CD4-positive, alpha-beta T cell (primary cell): ENCODE measurements at regions of chr7 and their contacts with region 1.

Region 1: GRCh38 chr7:105876091-105876963 is at the start of gene ATXN7L1:
- DNase-seq: peak; percentile 83 to 96 (median 92)
- ATAC-seq: peak; percentile 90
- H3K4me3 ChIP-seq: peak within 1 kb of the TSS; percentile 96
- H3K4me3 Mint-ChIP-seq: peak within 1 kb of the TSS; percentile 99
- H3K27ac ChIP-seq: peak within 1 kb of the TSS; percentile 55 to 77
- H3K27ac Mint-ChIP-seq: peak within 1 kb of the TSS; percentile 98
- H3K4me1 ChIP-seq: peaks cover 47% of the 10 kb centered on the region
- H3K4me1 Mint-ChIP-seq: peaks cover 81% of the 10 kb centered on the region
- H3K27me3 ChIP-seq: no peaks in the 10 kb centered on the region
- H3K27me3 Mint-ChIP-seq: no peaks in the 10 kb centered on the region
- CTCF ChIP-seq: peak; percentile 12
- total RNA-seq, gene ATXN7L1: 27.3 to 29.2 TPM

Region 2: DNA sequence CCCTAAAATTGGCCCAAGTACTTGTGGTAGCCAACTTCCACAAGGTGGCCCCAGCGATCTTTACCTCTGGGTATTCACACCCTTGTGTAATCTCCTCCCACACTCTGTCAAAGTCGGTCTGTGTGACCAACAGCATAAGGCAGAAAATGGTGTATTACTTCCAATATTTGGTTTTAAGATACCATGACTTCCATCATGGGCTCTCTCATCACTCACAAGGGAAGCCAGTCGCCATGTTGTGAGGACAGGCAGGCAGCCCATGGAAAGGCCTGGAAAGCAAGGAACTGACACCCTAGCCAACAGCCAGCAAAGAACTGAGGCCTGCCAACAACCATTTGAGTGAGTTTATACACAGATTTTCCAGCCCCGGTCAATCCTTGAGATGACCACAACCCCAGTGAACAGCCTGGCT is 953.3 kb before region 1 on chr7:
- CTCF ChIA-PET with region 1: no interaction called
- POLR2A ChIA-PET with region 1: no interaction called
- intact Hi-C with region 1: no loop called
- DNase-seq: peak; percentile 47 to 89 (median 65)
- ATAC-seq: peak; percentile 95
- H3K4me3 ChIP-seq: no peak overlapping the region
- H3K4me3 Mint-ChIP-seq: no peak overlapping the region
- H3K27ac ChIP-seq: no peak overlapping the region
- H3K27ac Mint-ChIP-seq: no peak overlapping the region
- H3K4me1 ChIP-seq: peaks cover 6% of the 10 kb centered on the region
- H3K4me1 Mint-ChIP-seq: no peaks in the 10 kb centered on the region
- H3K27me3 ChIP-seq: no peaks in the 10 kb centered on the region
- H3K27me3 Mint-ChIP-seq: no peaks in the 10 kb centered on the region
- CTCF ChIP-seq: peak; percentile 76

Region 3: DNA sequence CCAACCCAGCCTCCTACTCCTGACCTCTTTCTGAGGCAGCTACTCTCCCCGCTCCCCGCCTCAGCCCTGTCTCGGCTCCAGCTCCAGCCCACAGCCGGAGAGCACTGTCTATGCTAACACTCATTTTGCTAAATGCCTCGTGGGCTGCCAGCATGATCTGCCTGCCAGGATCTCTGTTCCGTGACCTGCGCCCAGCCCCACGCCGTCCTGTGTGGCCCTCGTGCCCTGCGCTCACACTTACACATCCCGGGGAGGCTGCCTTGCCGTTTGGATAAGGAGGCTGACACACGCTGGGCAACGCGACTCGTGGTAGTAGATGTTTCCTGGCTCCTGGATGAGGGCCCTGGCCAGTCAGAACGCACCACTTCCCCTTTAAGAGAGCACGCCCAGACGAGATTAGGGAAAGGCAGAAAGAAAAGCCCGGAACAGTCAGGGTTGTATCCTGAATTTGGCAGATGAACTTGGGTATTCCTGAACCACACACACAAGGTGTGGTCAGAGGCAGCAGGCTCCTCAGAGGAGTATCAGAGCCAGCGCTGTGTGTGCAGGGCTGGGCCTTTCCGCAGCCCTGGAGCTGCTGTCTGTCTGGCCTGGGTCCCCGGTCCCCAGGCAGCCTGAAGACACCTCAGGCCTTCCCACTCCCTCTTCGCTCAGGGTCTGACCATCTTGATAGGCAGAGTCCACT is 197.4 kb before region 1 on chr7:
- CTCF ChIA-PET with region 1: no interaction called
- POLR2A ChIA-PET with region 1: no interaction called
- intact Hi-C with region 1: loop called in 1 of 2 experiments (anchors 5 kb)
- DNase-seq: peak in 6 of 14 experiments; percentile 12 to 60 (median 50)
- ATAC-seq: peak; percentile 2
- H3K4me3 ChIP-seq: peak overlapping the region; percentile 55
- H3K4me3 Mint-ChIP-seq: peak overlapping the region; percentile 88
- H3K27ac ChIP-seq: peak overlapping the region; percentile 39 to 88
- H3K27ac Mint-ChIP-seq: peak overlapping the region; percentile 98
- H3K4me1 ChIP-seq: peaks cover 66% of the 10 kb centered on the region
- H3K4me1 Mint-ChIP-seq: peaks cover 88% of the 10 kb centered on the region
- H3K27me3 ChIP-seq: no peaks in the 10 kb centered on the region
- H3K27me3 Mint-ChIP-seq: no peaks in the 10 kb centered on the region
- CTCF ChIP-seq: no peak

Region 4: DNA sequence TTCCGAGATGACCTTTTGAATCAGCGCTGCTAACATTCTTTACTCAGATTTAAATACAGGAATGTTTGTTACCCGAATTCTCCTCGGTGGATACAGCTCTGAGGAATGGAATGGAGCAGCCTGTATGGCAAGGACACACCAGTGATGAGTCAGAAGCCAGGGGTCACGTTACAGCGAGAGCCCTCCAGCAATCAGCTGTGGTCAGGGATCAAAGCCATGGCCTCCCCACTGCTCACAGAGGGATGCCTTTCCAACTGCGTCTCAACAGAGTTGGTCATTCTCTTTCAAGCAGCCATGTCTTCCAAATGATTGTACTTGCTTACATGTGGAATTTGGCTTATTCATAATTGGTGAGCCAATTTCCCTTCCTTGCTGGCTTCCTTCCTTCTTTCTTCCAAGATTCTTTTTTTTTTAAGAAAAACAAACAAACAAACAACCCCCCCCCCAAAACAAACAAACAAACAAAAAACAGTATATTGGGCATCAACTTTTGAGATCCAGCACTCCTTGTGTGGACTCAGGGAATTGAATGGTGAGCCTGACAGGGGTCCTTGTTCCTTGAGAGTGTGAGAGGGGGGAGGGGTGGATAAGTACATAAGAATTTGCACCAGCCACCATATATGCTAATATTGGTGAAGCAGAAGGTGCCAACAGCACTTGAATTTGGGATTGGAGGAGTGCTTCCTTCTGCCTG is 100.1 kb before region 1 on chr7:
- CTCF ChIA-PET with region 1: no interaction called
- POLR2A ChIA-PET with region 1: no interaction called
- intact Hi-C with region 1: no loop called
- DNase-seq: no peak
- ATAC-seq: no peak
- H3K4me3 ChIP-seq: no peak overlapping the region
- H3K4me3 Mint-ChIP-seq: no peak overlapping the region
- H3K27ac ChIP-seq: no peak overlapping the region
- H3K27ac Mint-ChIP-seq: no peak overlapping the region
- H3K4me1 ChIP-seq: no peaks in the 10 kb centered on the region
- H3K4me1 Mint-ChIP-seq: peaks cover 8% of the 10 kb centered on the region
- H3K27me3 ChIP-seq: no peaks in the 10 kb centered on the region
- H3K27me3 Mint-ChIP-seq: no peaks in the 10 kb centered on the region
- CTCF ChIP-seq: no peak

Region 5: GRCh38 chr7:105808703-105809590 is 67.4 kb before region 1 on chr7:
- CTCF ChIA-PET with region 1: no interaction called
- POLR2A ChIA-PET with region 1: interaction called, 3 read pairs
- intact Hi-C with region 1: loop called (anchors 5 kb)
- DNase-seq: peak; percentile 33 to 86 (median 64)
- ATAC-seq: peak; percentile 95
- H3K4me3 ChIP-seq: no peak overlapping the region
- H3K4me3 Mint-ChIP-seq: peak overlapping the region; percentile 4
- H3K27ac ChIP-seq: peak overlapping the region; percentile 37 to 77
- H3K27ac Mint-ChIP-seq: peak overlapping the region; percentile 67
- H3K4me1 ChIP-seq: peaks cover 48% of the 10 kb centered on the region
- H3K4me1 Mint-ChIP-seq: peaks cover 74% of the 10 kb centered on the region
- H3K27me3 ChIP-seq: no peaks in the 10 kb centered on the region
- H3K27me3 Mint-ChIP-seq: no peaks in the 10 kb centered on the region
- CTCF ChIP-seq: no peak

Region 6: GRCh38 chr7:106009403-106010226 is 133.3 kb after region 1 on chr7:
- CTCF ChIA-PET with region 1: no interaction called
- POLR2A ChIA-PET with region 1: no interaction called
- intact Hi-C with region 1: loop called (anchors 2 kb)
- DNase-seq: peak; percentile 70 to 91 (median 78)
- ATAC-seq: peak; percentile 97
- H3K4me3 ChIP-seq: no peak overlapping the region
- H3K4me3 Mint-ChIP-seq: peak overlapping the region; percentile 16
- H3K27ac ChIP-seq: no peak overlapping the region
- H3K27ac Mint-ChIP-seq: peak overlapping the region; percentile 38
- H3K4me1 ChIP-seq: peaks cover 21% of the 10 kb centered on the region
- H3K4me1 Mint-ChIP-seq: peaks cover 51% of the 10 kb centered on the region
- H3K27me3 ChIP-seq: no peaks in the 10 kb centered on the region
- H3K27me3 Mint-ChIP-seq: no peaks in the 10 kb centered on the region
- CTCF ChIP-seq: peak; percentile 99

Region 7: DNA sequence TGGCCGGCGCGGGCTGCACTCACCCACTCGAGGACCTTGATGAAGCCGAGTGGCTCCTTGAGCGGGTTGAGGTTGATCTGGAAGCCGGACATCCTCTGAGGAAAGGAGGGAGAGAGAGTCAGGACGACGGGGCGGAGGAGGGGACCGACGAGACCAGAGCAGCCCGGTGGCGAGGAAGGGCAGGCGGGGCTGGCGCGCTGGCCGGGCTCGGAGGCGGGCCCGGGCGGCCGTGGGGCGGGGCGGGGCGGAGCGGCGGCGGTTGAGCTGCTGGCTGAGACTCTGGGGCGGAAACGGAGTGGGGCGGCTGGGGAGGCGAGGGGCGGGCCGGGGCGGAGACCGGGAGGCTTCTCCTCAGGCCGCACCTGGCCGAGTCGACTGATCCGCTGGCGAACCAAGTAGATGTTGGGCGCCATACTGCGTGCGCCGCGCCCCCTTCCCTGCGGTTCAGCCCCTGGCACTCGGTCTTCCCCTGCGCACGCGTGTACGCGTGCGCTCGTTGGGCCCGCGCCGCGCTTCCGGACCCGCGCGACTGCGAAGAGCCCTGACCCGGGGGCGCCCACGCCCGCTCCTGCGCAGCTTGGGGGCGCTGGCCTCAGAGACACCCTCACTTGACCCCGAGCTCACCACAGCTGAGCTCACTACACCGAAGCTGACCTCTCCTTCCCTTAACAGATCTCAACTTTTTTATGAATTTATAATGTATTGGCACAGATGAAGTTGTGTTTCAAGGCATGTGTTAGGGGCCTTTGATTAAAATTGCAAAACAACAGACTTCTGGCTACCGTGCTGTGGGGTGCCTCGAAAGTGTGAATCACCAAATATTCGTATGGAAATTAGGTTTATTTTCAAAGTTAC is 236.0 kb after region 1 on chr7 and contains the start of gene SYPL1:
- CTCF ChIA-PET with region 1: interaction called, 3 read pairs
- POLR2A ChIA-PET with region 1: no interaction called
- intact Hi-C with region 1: loop called (anchors 5 kb)
- DNase-seq: peak; percentile 89 to 98 (median 94)
- ATAC-seq: peak; percentile 84
- H3K4me3 ChIP-seq: peak within 1 kb of the TSS; percentile 73
- H3K4me3 Mint-ChIP-seq: peak within 1 kb of the TSS; percentile 94
- H3K27ac ChIP-seq: peak within 1 kb of the TSS; percentile 81 to 82
- H3K27ac Mint-ChIP-seq: peak within 1 kb of the TSS; percentile 90
- H3K4me1 ChIP-seq: peaks cover 26% of the 10 kb centered on the region
- H3K4me1 Mint-ChIP-seq: peaks cover 78% of the 10 kb centered on the region
- H3K27me3 ChIP-seq: no peaks in the 10 kb centered on the region
- H3K27me3 Mint-ChIP-seq: no peaks in the 10 kb centered on the region
- CTCF ChIP-seq: no peak
- total RNA-seq, gene SYPL1: 51.2 to 53.1 TPM